Naive thymus-derived CD4-positive, alpha-beta T cell (primary cell): ENCODE measurements at regions of chr20 and their contacts with region 1.

Region 1: GRCh38 chr20:2237059-2237458 is 58.7 kb upstream of the TGM3 start:
- DNase-seq: no peak
- ATAC-seq: no peak
- H3K4me3 ChIP-seq: no peak overlapping the region
- H3K4me3 Mint-ChIP-seq: no peak overlapping the region
- H3K27ac ChIP-seq: no peak overlapping the region
- H3K27ac Mint-ChIP-seq: no peak overlapping the region
- H3K4me1 ChIP-seq: no peaks in the 10 kb centered on the region
- H3K4me1 Mint-ChIP-seq: peaks cover 0 to 3% (median 0%) of the 10 kb centered on the region in 7 donors
- H3K27me3 ChIP-seq: no peaks in the 10 kb centered on the region
- H3K27me3 Mint-ChIP-seq: peaks cover 0 to 9% (median 0%) of the 10 kb centered on the region in 5 donors

Region 2: DNA sequence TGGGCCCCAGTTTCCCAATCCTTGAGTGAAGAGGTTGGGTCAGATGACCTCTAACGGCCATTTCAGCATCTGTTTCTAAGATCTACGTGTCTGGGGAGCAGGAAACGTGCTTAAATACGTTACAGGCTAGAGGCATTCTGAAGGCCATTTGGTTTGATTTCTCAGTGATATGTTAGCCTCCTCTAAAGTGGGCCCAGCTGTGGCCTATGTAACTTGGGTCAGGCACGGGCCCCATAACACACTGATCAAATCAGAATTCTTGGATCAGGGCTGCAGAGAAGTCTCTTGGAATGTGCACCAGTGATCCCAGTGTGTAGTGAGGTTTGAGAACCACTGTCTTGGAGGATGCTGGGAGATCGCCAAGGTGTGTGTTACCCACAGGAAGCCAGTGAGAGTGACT is 22.7 kb after region 1 on chr20:
- CTCF ChIA-PET with region 1: no interaction called
- POLR2A ChIA-PET with region 1: no interaction called
- intact Hi-C with region 1: loop called in 1 of 2 experiments (anchors 1 kb)
- DNase-seq: no peak
- ATAC-seq: no peak
- H3K4me3 ChIP-seq: no peak overlapping the region
- H3K4me3 Mint-ChIP-seq: no peak overlapping the region
- H3K27ac ChIP-seq: no peak overlapping the region
- H3K27ac Mint-ChIP-seq: no peak overlapping the region
- H3K4me1 ChIP-seq: no peaks in the 10 kb centered on the region
- H3K4me1 Mint-ChIP-seq: peaks cover 0 to 11% (median 0%) of the 10 kb centered on the region in 7 donors
- H3K27me3 ChIP-seq: no peaks in the 10 kb centered on the region
- H3K27me3 Mint-ChIP-seq: peaks cover 2 to 24% (median 14%) of the 10 kb centered on the region in 5 donors

Region 3: DNA sequence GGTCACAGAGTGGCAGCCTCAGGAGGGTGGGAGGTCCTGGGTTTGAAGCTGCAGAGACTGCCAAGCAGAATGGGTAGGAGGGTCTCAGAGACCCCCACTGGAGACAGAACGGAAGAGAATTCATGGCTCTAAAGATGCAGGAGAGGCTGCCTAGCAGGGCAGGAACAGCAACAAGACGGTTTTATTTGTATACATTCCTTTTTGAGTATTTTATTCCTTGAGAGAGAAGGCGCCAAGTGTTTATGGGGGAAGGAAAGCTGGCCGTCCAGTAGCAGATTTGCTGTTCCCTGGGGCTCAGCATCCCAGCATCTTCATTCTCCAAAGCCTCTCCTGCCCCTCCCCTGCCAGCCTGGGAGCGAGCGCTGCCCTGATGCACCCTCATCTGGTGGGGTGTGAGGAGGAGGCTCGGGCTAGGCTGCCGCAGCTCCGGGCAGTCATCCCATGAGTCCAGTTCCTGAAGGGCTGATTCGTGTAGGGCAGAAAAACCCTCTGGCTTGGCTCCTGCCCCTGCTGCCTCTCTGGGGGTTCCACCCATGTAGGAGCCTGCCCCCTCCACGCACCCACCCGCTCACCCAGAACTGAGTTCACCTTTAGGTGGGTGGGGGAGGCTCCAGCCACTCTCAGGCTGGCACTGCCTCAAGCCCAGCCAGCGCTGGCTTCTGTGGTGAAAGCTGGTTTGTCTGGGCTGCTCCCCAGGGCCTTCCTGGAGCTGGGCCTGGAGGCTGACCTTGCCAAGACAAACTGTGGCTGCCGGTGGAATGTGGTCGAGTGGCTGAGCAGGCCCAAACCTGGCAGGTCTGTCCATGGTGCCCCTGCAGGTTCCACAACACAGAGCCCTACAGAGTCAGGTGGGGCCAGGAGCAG is 530.9 kb after region 1 on chr20:
- CTCF ChIA-PET with region 1: no interaction called
- POLR2A ChIA-PET with region 1: no interaction called
- intact Hi-C with region 1: no loop called
- DNase-seq: no peak
- ATAC-seq: no peak
- H3K4me3 ChIP-seq: no peak overlapping the region
- H3K4me3 Mint-ChIP-seq: no peak overlapping the region
- H3K27ac ChIP-seq: no peak overlapping the region
- H3K27ac Mint-ChIP-seq: no peak overlapping the region
- H3K4me1 ChIP-seq: no peaks in the 10 kb centered on the region
- H3K4me1 Mint-ChIP-seq: peaks cover 0 to 4% (median 0%) of the 10 kb centered on the region in 7 donors
- H3K27me3 ChIP-seq: no peaks in the 10 kb centered on the region
- H3K27me3 Mint-ChIP-seq: peaks cover 4 to 21% (median 15%) of the 10 kb centered on the region in 5 donors